ENCODE measurements at regions of chr14 and their contacts with region 1.

Region 1: DNA sequence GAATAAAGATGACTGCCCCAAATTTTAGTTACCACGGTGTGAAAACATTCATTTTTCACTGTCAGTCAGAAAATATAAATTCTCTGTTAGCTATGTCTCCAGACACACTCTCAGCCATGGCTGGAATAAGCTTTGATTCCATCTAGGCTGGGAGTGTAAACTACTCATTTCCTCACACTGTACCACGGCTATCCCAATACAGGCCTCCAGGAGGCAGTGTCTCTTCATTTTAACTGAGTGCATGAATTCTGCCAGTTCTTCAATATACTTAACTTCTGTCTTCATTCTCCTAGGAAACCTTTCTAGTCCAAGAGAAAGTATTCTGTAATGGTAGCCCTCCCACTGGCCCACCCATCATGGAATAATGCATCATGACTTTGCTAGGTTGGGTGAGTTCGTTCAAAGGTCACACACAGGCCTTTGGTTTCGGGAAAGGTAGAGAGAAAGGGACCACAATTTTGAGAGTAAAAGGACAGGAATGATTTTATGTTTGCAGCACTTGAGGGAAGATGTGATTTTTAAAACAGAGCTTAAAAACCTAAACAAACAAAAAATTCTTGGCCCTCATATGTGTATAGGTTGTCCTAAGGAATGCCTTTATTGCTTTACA is 381.1 kb downstream of the SEC23A start:
- DNase-seq: peak; percentile 38 to 78
- H3K4me3 ChIP-seq: no peak overlapping the region
- H3K4me1 ChIP-seq: no peaks in the 10 kb centered on the region
- H3K27me3 ChIP-seq: no peaks in the 10 kb centered on the region

Region 2: DNA sequence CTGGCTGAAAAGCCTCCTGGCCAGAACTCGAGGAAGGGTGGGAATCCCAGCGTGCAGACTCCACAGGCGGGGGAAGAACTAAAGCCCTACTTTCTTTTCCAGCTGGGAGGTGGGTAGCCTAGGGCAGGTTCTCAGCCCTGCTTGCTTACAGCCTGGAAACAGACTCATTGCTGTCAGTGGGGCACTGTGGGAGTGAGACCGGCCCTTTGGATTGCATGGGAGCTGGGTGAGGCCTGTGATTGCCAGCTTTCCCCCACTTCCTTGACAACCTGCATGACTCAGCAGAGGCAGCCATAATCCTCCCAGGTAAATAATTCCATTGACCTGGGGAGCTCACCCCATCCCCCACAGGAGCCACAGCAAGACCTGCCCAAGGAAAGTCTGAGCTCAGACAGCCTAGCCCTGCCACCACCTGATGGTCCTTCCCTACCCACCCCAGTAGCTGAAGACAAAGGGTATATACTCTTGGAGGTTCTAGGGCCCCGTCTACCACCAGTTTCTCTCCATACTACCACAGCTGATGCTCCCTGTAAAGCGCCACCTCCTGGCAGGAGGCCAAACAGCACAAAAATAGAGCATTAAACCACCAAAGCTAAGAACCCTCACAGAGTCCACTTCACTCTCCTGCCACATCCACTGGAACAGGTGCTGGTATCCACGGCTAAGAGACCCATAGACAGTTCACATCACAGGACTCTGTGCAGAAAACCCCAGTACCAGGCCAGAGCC is 87.0 kb after region 1 on chr14:
- in situ Hi-C with region 1: no loop called
- DNase-seq: peak in 1 of 2 experiments; percentile 43
- H3K4me3 ChIP-seq: no peak overlapping the region
- H3K4me1 ChIP-seq: no peaks in the 10 kb centered on the region
- H3K27me3 ChIP-seq: no peaks in the 10 kb centered on the region; the same call in 1 of the 2 replicates

Region 3: GRCh38 chr14:38867561-38868150 is 145.7 kb after region 1 on chr14:
- in situ Hi-C with region 1: loop called (anchors 10 kb)
- DNase-seq: peak; percentile 76 to 86
- H3K4me3 ChIP-seq: no peak overlapping the region
- H3K4me1 ChIP-seq: no peaks in the 10 kb centered on the region
- H3K27me3 ChIP-seq: no peaks in the 10 kb centered on the region

Region 4: GRCh38 chr14:38900887-38901286 is 179.0 kb after region 1 on chr14:
- in situ Hi-C with region 1: no loop called
- DNase-seq: no peak
- H3K4me3 ChIP-seq: no peak overlapping the region
- H3K4me1 ChIP-seq: no peaks in the 10 kb centered on the region
- H3K27me3 ChIP-seq: peaks cover 3% of the 10 kb centered on the region; the same call in 1 of the 2 replicates

Region 5: DNA sequence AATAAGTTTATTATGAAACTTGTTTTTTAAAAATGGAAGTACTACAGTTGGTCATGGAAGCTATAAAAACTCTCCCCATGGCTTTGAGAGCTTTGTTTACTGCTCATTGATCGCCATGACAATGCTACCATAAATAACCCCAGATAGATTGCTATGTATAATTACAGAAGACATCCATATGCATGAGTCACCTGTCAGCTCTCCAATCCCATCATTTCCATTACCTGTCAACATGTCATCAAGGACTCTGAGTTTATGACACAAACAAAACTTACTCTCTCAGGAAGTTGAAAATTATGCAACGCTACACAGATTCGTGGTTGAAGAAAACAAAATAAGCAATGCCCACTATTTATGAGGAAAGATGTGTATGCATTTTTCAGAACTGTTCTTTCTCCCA is 236.7 kb after region 1 on chr14:
- in situ Hi-C with region 1: no loop called
- DNase-seq: no peak
- H3K4me3 ChIP-seq: no peak overlapping the region
- H3K4me1 ChIP-seq: no peaks in the 10 kb centered on the region
- H3K27me3 ChIP-seq: no peaks in the 10 kb centered on the region

Measured in HAP-1 (cell line).